ENCODE measurements at regions of chr12 and their contacts with region 1.

Region 1: DNA sequence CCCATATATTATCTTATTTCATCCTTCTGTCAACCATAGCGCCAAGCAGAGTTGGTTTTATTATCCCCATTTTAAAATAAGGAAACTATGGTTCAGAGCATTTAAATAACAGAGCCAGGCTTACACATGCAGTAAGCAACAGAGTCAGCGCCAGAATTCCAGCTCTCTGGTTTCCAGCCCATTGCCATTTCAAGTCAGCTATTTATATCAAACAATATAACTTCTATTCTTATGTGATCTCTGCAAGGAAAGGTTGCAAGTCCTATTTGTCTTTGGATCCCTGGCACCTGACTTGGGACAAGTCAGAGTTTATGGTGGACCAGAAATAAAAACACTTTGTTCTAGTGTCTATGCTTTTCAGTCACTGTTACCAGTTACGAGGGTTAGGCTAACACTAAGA is 174.1 kb upstream of the EEA1 start:
- DNase-seq: no peak
- ATAC-seq: peak; percentile 18; the same call in 2 of the 3 replicates
- H3K4me3 ChIP-seq: no peak overlapping the region
- H3K27ac ChIP-seq: peak overlapping the region; percentile 91
- H3K4me1 ChIP-seq: peaks cover 83% of the 10 kb centered on the region
- H3K27me3 ChIP-seq: no peaks in the 10 kb centered on the region
- CTCF ChIP-seq: no peak
- EP300 ChIP-seq: no peak
- POLR2A ChIP-seq: no peak
- RAD21 ChIP-seq: no peak

Region 2: GRCh38 chr12:92886131-92886530 is 217.0 kb before region 1 on chr12:
- CTCF ChIA-PET with region 1: no interaction called
- POLR2A ChIA-PET with region 1: no interaction called
- in situ Hi-C with region 1: no loop called
- intact Hi-C with region 1: no loop called
- DNase-seq: peak; percentile 28
- ATAC-seq: no peak; the same call in 2 of the 3 replicates
- H3K4me3 ChIP-seq: no peak overlapping the region
- H3K27ac ChIP-seq: no peak overlapping the region
- H3K4me1 ChIP-seq: no peaks in the 10 kb centered on the region
- H3K27me3 ChIP-seq: no peaks in the 10 kb centered on the region
- CTCF ChIP-seq: no peak
- EP300 ChIP-seq: no peak
- POLR2A ChIP-seq: no peak
- RAD21 ChIP-seq: no peak

Region 3: GRCh38 chr12:93008044-93008778 is 94.9 kb before region 1 on chr12:
- CTCF ChIA-PET with region 1: no interaction called
- POLR2A ChIA-PET with region 1: no interaction called
- in situ Hi-C with region 1: no loop called
- intact Hi-C with region 1: loop called (anchors 1 kb)
- DNase-seq: peak; percentile 62
- ATAC-seq: no peak
- H3K4me3 ChIP-seq: peak overlapping the region; percentile 25 to 68 (median 50); a peak in 5 of 6 replicates
- H3K27ac ChIP-seq: peak overlapping the region; percentile 89
- H3K4me1 ChIP-seq: peaks cover 79% of the 10 kb centered on the region
- H3K27me3 ChIP-seq: no peaks in the 10 kb centered on the region
- CTCF ChIP-seq: no peak
- EP300 ChIP-seq: no peak; a peak in 1 of 4 replicates
- POLR2A ChIP-seq: no peak
- RAD21 ChIP-seq: no peak

Region 4: GRCh38 chr12:93060666-93061471 is 42.3 kb before region 1 on chr12:
- CTCF ChIA-PET with region 1: no interaction called
- POLR2A ChIA-PET with region 1: no interaction called
- in situ Hi-C with region 1: no loop called
- intact Hi-C with region 1: no loop called
- DNase-seq: peak; percentile 63
- ATAC-seq: peak; percentile 41; the same call in 1 of the 3 replicates
- H3K4me3 ChIP-seq: no peak overlapping the region
- H3K27ac ChIP-seq: no peak overlapping the region
- H3K4me1 ChIP-seq: peaks cover 17% of the 10 kb centered on the region
- H3K27me3 ChIP-seq: no peaks in the 10 kb centered on the region; a peak in 1 of 5 replicates
- CTCF ChIP-seq: no peak
- EP300 ChIP-seq: no peak
- POLR2A ChIP-seq: no peak
- RAD21 ChIP-seq: no peak